ENCODE measurements at regions of chr2 and their contacts with region 1.

Region 1: DNA sequence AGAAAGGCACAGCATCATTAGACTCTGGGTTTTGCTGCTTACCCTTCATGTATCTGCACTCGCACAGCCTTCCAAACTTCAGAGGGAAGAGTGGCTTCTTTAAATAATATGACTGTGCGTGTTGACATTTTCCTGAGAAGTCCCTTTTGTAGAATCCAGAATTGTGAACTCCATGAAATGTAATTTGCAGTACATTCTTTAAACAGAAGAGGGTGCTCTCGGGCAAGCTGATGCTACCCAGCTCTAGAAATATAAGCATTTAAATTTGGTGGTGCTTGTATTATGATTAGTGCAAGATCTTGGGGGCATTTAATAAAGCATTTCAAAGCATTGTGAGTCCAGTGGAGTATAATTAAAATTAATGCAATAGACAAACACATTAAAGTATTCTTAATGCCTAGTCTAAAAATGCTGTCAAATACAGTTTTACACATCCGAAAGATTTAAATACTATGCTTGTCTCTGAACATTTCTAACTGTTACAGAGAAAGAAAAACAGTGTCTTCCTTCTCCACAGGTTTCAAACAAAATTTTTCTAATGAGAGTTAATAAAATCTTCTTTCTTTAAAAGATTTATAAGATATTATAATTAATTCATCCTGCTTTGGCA is 17.3 kb upstream of the GTF2A1L start:
- DNase-seq: peak in 18 of 42 donors; percentile 4 to 75 (median 38)

Region 2: GRCh38 chr2:48725696-48726494 is 125.6 kb after region 1 on chr2:
- intact Hi-C with region 1: loop called (anchors 2 kb)
- DNase-seq: peak in 40 of 42 donors; percentile 8 to 87 (median 55)

Measured in head of caudate nucleus (tissue), 42 donors.